HEK293 (cell line): ENCODE measurements at regions of chr4 and their contacts with region 1.

Region 1: GRCh38 chr4:87422104-87423052 is at the start of gene NUDT9:
- H3K4me3 ChIP-seq: peak within 1 kb of the TSS; percentile 71
- H3K27ac ChIP-seq: peak within 1 kb of the TSS; percentile 88
- H3K4me1 ChIP-seq: no peaks in the 10 kb centered on the region
- CTCF ChIP-seq: no peak

Region 2: DNA sequence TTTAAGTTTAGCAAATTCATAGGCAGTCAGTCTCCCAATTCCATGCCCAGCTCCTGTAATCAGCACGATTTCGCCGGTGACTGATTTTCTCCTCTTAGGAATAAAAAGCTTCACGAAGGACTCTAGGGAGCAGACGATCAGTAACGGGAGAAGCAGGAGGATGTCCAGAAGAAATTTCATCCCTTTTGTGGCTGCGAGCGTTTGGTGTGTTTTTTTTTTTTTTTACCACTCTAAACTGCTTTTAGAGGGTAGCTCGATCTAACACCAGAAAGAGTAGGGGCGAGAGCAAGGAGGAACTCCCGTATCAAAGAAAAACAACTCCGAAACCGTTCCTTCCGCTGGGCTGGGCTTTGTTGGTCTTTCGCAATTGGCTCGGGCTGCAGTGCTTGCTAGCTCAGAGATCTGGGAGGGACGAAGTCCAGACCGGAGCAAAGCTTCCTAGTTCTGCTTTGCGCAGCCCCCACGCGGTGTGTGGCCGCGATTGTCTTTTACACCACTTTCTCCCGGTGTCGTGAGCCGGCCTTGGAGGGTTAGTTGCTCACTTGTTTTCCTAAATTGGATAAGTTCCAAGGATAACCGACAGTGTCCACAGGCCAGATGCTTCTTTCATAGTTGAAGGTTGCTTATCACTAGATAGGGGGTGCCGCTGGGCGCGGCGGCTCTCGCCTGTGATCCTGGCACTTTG is 31.3 kb before region 1 on chr4 and contains the start of gene HSD17B11:
- CTCF ChIA-PET with region 1: no interaction called
- POLR2A ChIA-PET with region 1: interaction called, 22 read pairs
- H3K4me3 ChIP-seq: peak within 1 kb of the TSS; percentile 61
- H3K27ac ChIP-seq: peak within 1 kb of the TSS; percentile 65
- H3K4me1 ChIP-seq: no peaks in the 10 kb centered on the region
- CTCF ChIP-seq: peak; percentile 54; the same call in 1 of the 2 replicates

Region 3: DNA sequence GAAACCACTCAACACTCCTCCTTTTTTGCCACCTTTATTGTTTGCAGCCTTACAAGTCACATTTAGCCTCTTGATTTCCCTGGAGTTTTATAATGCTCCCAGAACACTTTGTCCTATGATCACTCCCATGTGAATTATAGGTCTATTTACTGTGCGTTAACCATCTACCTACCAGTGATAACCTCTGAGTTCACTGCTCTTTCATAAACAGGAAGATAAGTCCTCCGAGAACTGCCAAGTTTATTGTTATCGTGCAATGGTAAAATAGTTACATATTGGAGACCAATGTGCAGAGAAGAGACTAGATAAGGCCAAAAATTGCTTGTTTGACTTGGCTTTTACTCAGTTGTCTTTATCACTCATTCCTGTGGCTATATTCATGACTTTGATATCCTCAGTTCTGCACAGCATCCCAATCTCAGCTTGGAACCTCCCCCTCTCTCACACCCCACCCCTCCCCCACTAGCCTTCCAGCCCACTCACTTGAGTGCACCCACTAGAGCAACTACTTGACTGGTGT is 12.9 kb before region 1 on chr4:
- CTCF ChIA-PET with region 1: no interaction called
- POLR2A ChIA-PET with region 1: interaction called, 10 read pairs
- H3K4me3 ChIP-seq: no peak overlapping the region
- H3K27ac ChIP-seq: no peak overlapping the region
- H3K4me1 ChIP-seq: no peaks in the 10 kb centered on the region
- CTCF ChIP-seq: no peak